Naive thymus-derived CD4-positive, alpha-beta T cell (primary cell): ENCODE measurements at regions of chr1 and their contacts with region 1.

Region 1: DNA sequence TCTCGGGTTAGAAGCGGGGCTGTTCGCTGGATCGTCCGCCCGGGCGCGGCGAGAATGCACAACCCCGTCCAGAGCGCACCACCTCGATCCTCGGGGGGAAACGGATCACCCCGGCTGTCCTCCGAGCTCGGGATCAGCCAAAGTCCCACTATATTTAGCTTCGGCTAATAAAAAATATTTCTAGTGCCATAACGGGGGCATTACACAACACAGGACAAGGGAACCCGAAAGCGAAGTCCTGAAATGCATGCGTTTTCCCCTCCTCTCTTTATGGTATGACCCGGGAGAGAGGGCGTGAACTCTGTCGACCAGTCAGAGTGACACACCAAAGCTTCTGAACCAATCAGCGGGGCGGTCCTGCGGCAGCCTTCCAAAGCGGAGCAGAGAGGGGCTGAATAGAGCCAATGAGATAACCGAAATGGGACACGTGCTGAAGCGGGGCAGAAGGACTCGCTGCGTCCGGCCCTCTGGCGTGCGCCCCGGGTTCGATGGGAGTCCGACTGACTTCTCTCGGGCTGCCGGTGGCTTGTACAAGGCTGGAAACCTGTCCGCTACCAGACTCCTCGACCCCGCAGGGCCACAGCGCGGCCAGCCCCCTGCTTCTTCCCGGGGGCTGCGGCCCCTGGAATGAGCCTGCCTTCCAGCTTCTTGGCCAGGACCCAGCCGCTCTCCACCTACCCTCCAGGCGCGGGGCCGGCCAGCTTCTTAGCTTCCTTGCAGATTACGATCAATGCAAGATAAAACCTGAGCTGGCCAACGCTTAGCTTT is at the start of gene ALDH4A1:
- DNase-seq: peak; percentile 73 to 95 (median 93)
- ATAC-seq: peak; percentile 98
- H3K4me3 ChIP-seq: peak within 1 kb of the TSS; percentile 57
- H3K4me3 Mint-ChIP-seq: peak within 1 kb of the TSS; percentile 86 to 99 (median 94)
- H3K27ac ChIP-seq: peak within 1 kb of the TSS; percentile 83
- H3K27ac Mint-ChIP-seq: peak within 1 kb of the TSS; percentile 88 to 98 (median 97)
- H3K4me1 ChIP-seq: peaks cover 3 to 12% of the 10 kb centered on the region in 2 donors
- H3K4me1 Mint-ChIP-seq: peaks cover 22 to 50% (median 41%) of the 10 kb centered on the region in 7 donors
- H3K27me3 ChIP-seq: no peaks in the 10 kb centered on the region
- H3K27me3 Mint-ChIP-seq: no peaks in the 10 kb centered on the region
- total RNA-seq, gene ALDH4A1: 1.3 to 3.2 (median 1.6) TPM

Region 2: GRCh38 chr1:18926315-18927081 is 23.8 kb after region 1 on chr1:
- CTCF ChIA-PET with region 1: interaction called, 29 read pairs
- POLR2A ChIA-PET with region 1: interaction called, 10 read pairs
- intact Hi-C with region 1: loop called in 1 of 2 experiments (anchors 1 kb)
- DNase-seq: peak; percentile 43 to 84 (median 73)
- ATAC-seq: peak; percentile 86
- H3K4me3 ChIP-seq: peak overlapping the region; percentile 84
- H3K4me3 Mint-ChIP-seq: peak overlapping the region; percentile 73 to 93 (median 83)
- H3K27ac ChIP-seq: peak overlapping the region; percentile 71
- H3K27ac Mint-ChIP-seq: peak overlapping the region; percentile 57 to 99 (median 95)
- H3K4me1 ChIP-seq: peaks cover 58 to 73% of the 10 kb centered on the region in 2 donors
- H3K4me1 Mint-ChIP-seq: peaks cover 34 to 90% (median 80%) of the 10 kb centered on the region in 7 donors
- H3K27me3 ChIP-seq: no peaks in the 10 kb centered on the region
- H3K27me3 Mint-ChIP-seq: no peaks in the 10 kb centered on the region

Region 3: DNA sequence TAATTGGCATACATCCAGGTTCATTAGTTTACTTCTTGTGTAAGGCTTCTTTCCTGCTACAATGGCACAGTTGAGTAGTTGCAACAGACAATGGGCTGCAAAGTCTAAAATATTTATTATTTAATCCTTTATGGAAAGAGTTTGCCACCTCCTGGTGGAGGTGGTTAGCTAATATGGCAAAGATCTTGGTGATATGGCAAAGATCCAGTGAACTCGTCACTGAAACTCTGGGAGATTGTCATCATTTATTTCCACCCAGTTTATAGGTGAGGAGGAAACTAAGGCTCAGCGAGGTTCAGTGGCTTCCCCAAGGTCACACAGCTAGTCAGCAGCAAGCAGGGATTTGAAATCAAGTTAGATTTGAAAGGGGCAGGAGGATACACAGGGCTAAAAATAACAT is 69.8 kb after region 1 on chr1:
- CTCF ChIA-PET with region 1: interaction called, 105 read pairs
- POLR2A ChIA-PET with region 1: interaction called, 8 read pairs
- intact Hi-C with region 1: loop called (anchors 1 kb)
- DNase-seq: peak in 5 of 9 donors; percentile 25 to 63 (median 49)
- ATAC-seq: peak; percentile 59
- H3K4me3 ChIP-seq: no peak overlapping the region
- H3K4me3 Mint-ChIP-seq: peak overlapping the region in 1 of 10 donors; percentile 49
- H3K27ac ChIP-seq: no peak overlapping the region
- H3K27ac Mint-ChIP-seq: peak overlapping the region in 1 of 9 donors; percentile 84
- H3K4me1 ChIP-seq: peaks cover 0 to 5% of the 10 kb centered on the region in 2 donors
- H3K4me1 Mint-ChIP-seq: peaks cover 0 to 9% (median 3%) of the 10 kb centered on the region in 7 donors
- H3K27me3 ChIP-seq: no peaks in the 10 kb centered on the region
- H3K27me3 Mint-ChIP-seq: peaks cover 0 to 16% (median 0%) of the 10 kb centered on the region in 5 donors

Region 4: GRCh38 chr1:19087737-19088594 is 185.3 kb after region 1 on chr1:
- CTCF ChIA-PET with region 1: interaction called, 10 read pairs
- POLR2A ChIA-PET with region 1: no interaction called
- intact Hi-C with region 1: no loop called
- DNase-seq: peak in 1 of 9 donors; percentile 33
- ATAC-seq: no peak
- H3K4me3 ChIP-seq: no peak overlapping the region
- H3K4me3 Mint-ChIP-seq: peak overlapping the region in 1 of 10 donors; percentile 8
- H3K27ac ChIP-seq: no peak overlapping the region
- H3K27ac Mint-ChIP-seq: peak overlapping the region in 5 of 9 donors; percentile 1 to 72 (median 36)
- H3K4me1 ChIP-seq: no peaks in the 10 kb centered on the region
- H3K4me1 Mint-ChIP-seq: peaks cover 0 to 41% (median 4%) of the 10 kb centered on the region in 7 donors
- H3K27me3 ChIP-seq: no peaks in the 10 kb centered on the region
- H3K27me3 Mint-ChIP-seq: no peaks in the 10 kb centered on the region

Region 5: DNA sequence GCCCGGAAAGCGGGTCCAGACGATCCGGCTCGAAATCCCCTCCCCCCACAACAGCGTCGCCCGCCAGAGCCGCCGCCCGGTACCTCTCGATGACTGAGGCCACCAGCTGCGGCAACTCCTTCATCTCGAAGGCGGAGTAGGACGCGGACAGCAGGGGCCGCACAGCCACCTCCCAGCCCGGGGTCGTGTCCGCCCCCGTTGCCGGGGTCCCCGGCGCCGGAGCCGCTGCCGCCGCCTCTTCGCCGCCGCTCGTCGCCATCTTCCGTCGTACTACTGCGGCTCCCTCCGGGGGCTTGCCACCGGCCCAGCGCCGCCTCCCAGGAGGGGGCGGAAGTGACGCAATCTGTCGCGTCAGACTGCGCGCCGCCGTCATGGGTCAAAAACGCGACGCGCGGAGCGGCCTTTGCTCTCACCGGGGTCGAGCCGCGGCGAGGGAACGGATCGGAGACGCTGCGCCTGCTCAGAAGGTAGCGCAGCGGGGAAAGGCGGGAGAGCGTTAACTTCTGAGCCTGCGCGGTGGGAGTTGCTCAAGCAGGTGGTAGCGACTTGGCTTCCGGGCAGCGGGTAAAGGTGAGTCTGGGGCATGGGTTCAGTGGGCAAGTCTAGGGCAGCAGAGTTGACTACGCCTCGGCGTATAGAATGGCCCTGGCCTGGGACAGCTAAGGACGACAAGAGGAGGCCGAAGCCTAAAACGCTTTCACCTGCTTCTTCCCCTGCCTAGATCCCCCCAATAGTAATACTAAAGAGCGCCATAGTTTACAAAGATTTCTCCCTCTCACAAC is 307.5 kb after region 1 on chr1 and contains the start of gene UBR4:
- CTCF ChIA-PET with region 1: no interaction called
- POLR2A ChIA-PET with region 1: interaction called, 3 read pairs
- intact Hi-C with region 1: loop called (anchors 1 to 10 kb)
- DNase-seq: peak; percentile 95 to 97 (median 96)
- ATAC-seq: peak; percentile 95
- H3K4me3 ChIP-seq: peak within 1 kb of the TSS; percentile 60
- H3K4me3 Mint-ChIP-seq: peak within 1 kb of the TSS; percentile 83 to 98 (median 94)
- H3K27ac ChIP-seq: peak within 1 kb of the TSS; percentile 85
- H3K27ac Mint-ChIP-seq: peak within 1 kb of the TSS; percentile 94 to 99 (median 97)
- H3K4me1 ChIP-seq: peaks cover 24 to 38% of the 10 kb centered on the region in 2 donors
- H3K4me1 Mint-ChIP-seq: peaks cover 49 to 87% (median 82%) of the 10 kb centered on the region in 7 donors
- H3K27me3 ChIP-seq: no peaks in the 10 kb centered on the region
- H3K27me3 Mint-ChIP-seq: peaks cover 0 to 2% (median 0%) of the 10 kb centered on the region in 5 donors
- total RNA-seq, gene UBR4: 120 to 174 (median 159) TPM

Region 6: DNA sequence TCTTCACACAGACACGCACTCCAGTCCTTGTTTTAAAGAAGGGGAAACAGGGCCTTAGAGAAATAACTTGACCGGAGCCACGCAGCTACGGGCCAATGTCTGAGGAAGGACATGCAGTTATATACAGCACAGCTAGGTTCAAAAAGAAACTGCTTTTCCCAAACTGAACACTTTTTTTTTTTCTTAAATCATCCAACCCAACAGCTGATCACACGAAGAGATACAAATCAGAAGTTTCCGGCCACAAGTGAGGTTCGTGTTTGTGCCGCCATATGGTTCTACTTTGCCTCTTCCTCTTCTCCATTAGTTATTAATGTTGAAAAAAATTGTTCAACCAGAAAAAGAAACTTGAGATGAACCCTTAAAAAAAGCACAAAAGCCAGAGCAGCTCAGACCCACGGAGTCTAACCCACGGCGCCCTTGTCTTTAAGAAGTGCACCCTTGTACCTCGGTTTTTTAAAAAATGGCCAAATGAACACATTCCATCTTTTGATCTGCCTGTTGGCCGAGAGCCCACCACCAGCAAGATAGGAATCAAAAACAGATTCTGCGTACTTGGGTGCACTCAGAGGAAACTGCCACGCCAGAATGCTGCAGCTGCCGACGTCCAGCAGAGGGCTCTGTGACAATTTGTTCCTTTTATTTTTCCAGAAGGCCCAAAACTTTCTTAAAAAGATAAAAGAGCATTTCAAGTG is 488.3 kb after region 1 on chr1:
- CTCF ChIA-PET with region 1: no interaction called
- POLR2A ChIA-PET with region 1: no interaction called
- intact Hi-C with region 1: loop called in 1 of 2 experiments (anchors 2 kb)
- DNase-seq: peak; percentile 33 to 84 (median 76)
- ATAC-seq: peak; percentile 84
- H3K4me3 ChIP-seq: peak overlapping the region; percentile 46
- H3K4me3 Mint-ChIP-seq: peak overlapping the region; percentile 78 to 90 (median 84)
- H3K27ac ChIP-seq: peak overlapping the region; percentile 60
- H3K27ac Mint-ChIP-seq: peak overlapping the region; percentile 82 to 98 (median 94)
- H3K4me1 ChIP-seq: peaks cover 39 to 47% of the 10 kb centered on the region in 2 donors
- H3K4me1 Mint-ChIP-seq: peaks cover 58 to 91% (median 83%) of the 10 kb centered on the region in 7 donors
- H3K27me3 ChIP-seq: no peaks in the 10 kb centered on the region
- H3K27me3 Mint-ChIP-seq: no peaks in the 10 kb centered on the region